PC-9 (cell line): ENCODE measurements at regions of chr16 and their contacts with region 1.

Region 1: GRCh38 chr16:3150346-3151218 is 15.8 kb downstream of the ZNF213 start:
- DNase-seq: peak; percentile 91 to 99
- H3K4me3 ChIP-seq: peak overlapping the region; percentile 99
- H3K27ac ChIP-seq: peak overlapping the region; percentile 75
- H3K4me1 ChIP-seq: peaks cover 6% of the 10 kb centered on the region
- H3K27me3 ChIP-seq: no peaks in the 10 kb centered on the region
- CTCF ChIP-seq: no peak

Region 2: GRCh38 chr16:3400779-3401688 is 250.5 kb after region 1 on chr16 and contains the starts of genes ZNF174 and ZSCAN32:
- CTCF ChIA-PET with region 1: no interaction called
- POLR2A ChIA-PET with region 1: interaction called, 6 read pairs
- intact Hi-C with region 1: loop called (anchors 2 kb)
- DNase-seq: peak; percentile 98 to 100
- H3K4me3 ChIP-seq: peak within 1 kb of the TSS; percentile 74
- H3K27ac ChIP-seq: peak within 1 kb of the TSS; percentile 40; the same call in 1 of the 2 replicates
- H3K4me1 ChIP-seq: peaks cover 12% of the 10 kb centered on the region; the same call in 1 of the 2 replicates
- H3K27me3 ChIP-seq: no peaks in the 10 kb centered on the region
- CTCF ChIP-seq: no peak
- total RNA-seq, gene ZNF174: 12.1 and 13.2 TPM in 2 replicates
- total RNA-seq, gene ZSCAN32: 15.5 and 16.4 TPM in 2 replicates